ENCODE measurements at regions of chr3 and their contacts with region 1.

Region 1: DNA sequence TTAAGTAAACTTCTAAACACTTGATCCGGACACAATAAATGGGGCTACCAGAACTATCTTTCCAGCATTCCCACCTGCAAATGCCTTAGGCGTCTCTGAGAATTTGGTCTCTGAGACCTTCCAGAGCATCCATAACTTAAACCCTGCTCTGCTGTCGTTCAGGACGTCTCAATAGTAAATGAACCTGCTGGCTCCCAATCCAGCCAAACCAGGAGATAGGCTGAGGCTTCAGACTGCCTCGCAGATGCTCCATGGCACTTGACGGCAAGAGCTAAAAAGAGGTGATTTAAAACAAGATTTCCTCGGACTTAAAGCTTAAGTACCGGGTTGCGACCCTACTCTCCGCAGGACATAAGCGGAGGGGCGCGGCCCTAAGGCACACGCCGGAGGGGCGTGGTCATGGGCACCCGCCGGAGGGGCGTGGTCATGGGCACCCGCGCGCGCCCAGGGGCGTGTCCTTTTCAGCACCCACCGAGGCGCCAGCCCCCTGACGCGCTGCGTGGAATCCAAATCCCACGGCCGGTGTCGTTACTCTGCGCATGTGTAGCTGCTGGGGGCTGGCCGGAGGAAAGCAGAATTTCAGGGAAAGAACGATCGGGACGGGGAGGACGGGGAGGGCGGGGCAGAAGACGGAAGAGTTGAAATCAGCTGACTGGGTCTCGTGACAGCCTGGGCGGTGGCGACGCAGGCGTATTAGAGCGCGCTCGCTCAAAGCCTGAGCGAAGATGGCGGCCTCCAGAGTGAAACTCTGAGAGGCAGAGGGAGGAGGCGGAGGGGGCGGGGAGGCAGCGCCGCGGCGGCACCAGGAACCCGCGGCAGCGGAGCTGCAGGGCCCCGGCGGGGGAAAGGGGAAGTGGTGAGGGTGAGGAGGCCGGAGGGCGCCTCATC is at the start of gene DNAJC13:
- DNase-seq: peak; percentile 83 to 94 (median 92)
- H3K4me3 ChIP-seq: peak within 1 kb of the TSS; percentile 68 to 100 (median 98)
- H3K27ac ChIP-seq: peak within 1 kb of the TSS; percentile 73 to 97 (median 91)
- H3K27me3 ChIP-seq: no peaks in the 10 kb centered on the region
- CTCF ChIP-seq: peak in 10 of 56 donors; percentile 4 to 36 (median 16)
- total RNA-seq, gene DNAJC13: 32.6 to 60.2 (median 43.7) TPM

Region 2: DNA sequence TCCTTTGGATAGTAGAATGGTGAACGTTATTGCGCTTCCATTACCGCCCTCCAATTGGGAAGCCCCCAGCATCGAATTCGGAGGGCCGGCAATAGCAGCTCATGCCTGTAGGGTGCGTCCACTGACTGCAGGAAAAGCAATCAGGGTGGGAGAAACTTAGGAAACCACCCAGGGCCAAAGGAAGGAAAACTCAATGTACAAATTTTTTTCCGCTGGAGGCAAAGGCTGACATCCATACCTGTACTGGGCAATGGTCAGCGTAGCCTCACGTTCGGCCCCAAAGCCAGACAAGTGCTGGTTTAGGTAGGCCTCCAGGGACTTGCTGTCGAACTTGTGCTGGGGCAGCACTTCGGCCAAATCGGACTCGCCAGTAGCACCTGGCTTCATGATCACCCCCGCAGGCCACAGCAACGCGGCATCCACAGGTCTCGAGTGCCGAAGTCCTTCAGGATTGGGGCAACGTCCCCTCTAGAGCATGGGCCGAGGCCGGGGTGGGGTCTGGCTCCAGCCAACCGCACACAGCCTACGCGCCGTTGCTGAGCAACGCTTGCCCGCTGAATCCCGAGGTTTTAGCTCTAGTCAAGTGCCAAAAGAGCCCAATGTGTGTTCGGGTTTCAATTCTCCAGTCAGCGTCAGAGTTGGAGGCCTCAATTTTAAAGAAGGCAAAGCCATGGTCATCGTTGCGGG is 242.5 kb after region 1 on chr3 and contains the start of gene ACAD11:
- intact Hi-C with region 1: loop called in 1 of 2 experiments (anchors 10 kb)
- DNase-seq: peak; percentile 50 to 83 (median 68)
- H3K4me3 ChIP-seq: peak within 1 kb of the TSS; percentile 67 to 99 (median 89)
- H3K27ac ChIP-seq: peak within 1 kb of the TSS; percentile 56 to 97 (median 91)
- H3K27me3 ChIP-seq: no peaks in the 10 kb centered on the region
- CTCF ChIP-seq: peak in 55 of 56 donors; percentile 29 to 70 (median 55)
- total RNA-seq, gene ACAD11: 18.7 to 51.8 (median 32.6) TPM

Measured in dorsolateral prefrontal cortex (tissue), 120 donors.